ENCODE measurements at regions of chr10 and their contacts with region 1.

Region 1: DNA sequence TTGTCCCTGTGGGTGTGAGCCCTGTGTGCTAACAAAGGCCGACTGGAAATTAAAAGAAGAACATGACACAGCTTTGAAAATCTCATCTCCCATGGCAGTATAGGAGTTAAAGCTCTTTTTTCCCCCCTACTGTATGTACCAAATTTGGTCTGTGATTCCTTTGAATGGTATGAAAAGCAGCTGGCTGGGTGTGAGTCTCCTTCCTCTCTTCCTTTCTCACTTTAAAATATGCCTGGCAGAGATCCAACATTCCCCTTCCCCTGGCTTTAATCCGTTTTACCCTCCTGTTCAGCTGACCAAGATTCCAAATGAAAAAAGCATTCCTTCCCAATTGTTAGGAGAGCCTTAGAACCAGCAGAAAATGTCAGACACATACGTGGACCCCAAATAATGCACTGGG is 225.0 kb upstream of the CELF2 start:
- DNase-seq: no peak
- ATAC-seq: peak; percentile 53 to 66
- H3K4me3 ChIP-seq: no peak overlapping the region
- H3K27ac ChIP-seq: no peak overlapping the region
- H3K4me1 ChIP-seq: peaks cover 2% of the 10 kb centered on the region
- H3K27me3 ChIP-seq: no peaks in the 10 kb centered on the region

Region 2: GRCh38 chr10:10872035-10872673 is 79.5 kb after region 1 on chr10:
- intact Hi-C with region 1: loop called in 1 of 4 experiments (anchors 10 kb)
- DNase-seq: peak in 1 of 3 donors; percentile 30
- ATAC-seq: peak; percentile 97 to 99
- H3K4me3 ChIP-seq: no peak overlapping the region
- H3K27ac ChIP-seq: peak overlapping the region; percentile 83
- H3K4me1 ChIP-seq: peaks cover 4% of the 10 kb centered on the region
- H3K27me3 ChIP-seq: no peaks in the 10 kb centered on the region

Region 3: GRCh38 chr10:11197266-11197712 is 404.6 kb after region 1 on chr10:
- intact Hi-C with region 1: no loop called
- DNase-seq: peak; percentile 53 to 79 (median 65)
- ATAC-seq: peak; percentile 86 to 89
- H3K4me3 ChIP-seq: no peak overlapping the region
- H3K27ac ChIP-seq: peak overlapping the region; percentile 50
- H3K4me1 ChIP-seq: peaks cover 20% of the 10 kb centered on the region
- H3K27me3 ChIP-seq: no peaks in the 10 kb centered on the region

Measured in right cardiac atrium (tissue), 5 donors.